Mammary epithelial cell (primary cell): ENCODE measurements at regions of chr13 and their contacts with region 1.

Region 1: GRCh38 chr13:31797154-31797775 is 57.9 kb downstream of the RXFP2 start:
- DNase-seq: peak; percentile 22
- H3K4me3 ChIP-seq: no peak overlapping the region
- H3K27ac ChIP-seq: no peak overlapping the region
- H3K4me1 ChIP-seq: no peaks in the 10 kb centered on the region
- H3K27me3 ChIP-seq: no peaks in the 10 kb centered on the region
- CTCF ChIP-seq: peak; percentile 35 to 48

Region 2: DNA sequence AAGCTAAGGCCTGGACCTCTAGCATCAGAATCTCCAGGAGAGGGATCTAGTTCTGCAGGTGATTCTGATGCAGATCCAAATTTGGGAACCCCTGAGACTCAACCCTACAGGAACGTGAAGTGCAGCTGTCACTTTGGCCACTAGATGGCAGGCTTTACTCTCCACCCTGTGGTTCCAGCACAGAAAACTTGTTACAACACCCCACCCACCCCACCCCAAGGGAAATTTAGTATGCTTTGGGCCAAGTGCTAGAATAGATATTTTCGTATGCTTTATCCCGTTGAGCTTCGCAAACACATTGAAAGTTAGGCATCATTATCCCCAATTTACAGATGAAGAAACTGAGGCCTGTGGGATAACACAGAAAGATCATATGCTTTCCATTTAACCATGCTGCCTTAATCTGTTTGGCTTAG is 365.5 kb before region 1 on chr13:
- CTCF ChIA-PET with region 1: no interaction called
- dilution Hi-C with region 1: no loop called
- in situ Hi-C with region 1: loop called (anchors 10 kb)
- intact Hi-C with region 1: loop called (anchors 1 kb)
- DNase-seq: peak; percentile 21
- H3K4me3 ChIP-seq: no peak overlapping the region
- H3K27ac ChIP-seq: no peak overlapping the region
- H3K4me1 ChIP-seq: no peaks in the 10 kb centered on the region
- H3K27me3 ChIP-seq: no peaks in the 10 kb centered on the region
- CTCF ChIP-seq: peak; percentile 70 to 76

Region 3: DNA sequence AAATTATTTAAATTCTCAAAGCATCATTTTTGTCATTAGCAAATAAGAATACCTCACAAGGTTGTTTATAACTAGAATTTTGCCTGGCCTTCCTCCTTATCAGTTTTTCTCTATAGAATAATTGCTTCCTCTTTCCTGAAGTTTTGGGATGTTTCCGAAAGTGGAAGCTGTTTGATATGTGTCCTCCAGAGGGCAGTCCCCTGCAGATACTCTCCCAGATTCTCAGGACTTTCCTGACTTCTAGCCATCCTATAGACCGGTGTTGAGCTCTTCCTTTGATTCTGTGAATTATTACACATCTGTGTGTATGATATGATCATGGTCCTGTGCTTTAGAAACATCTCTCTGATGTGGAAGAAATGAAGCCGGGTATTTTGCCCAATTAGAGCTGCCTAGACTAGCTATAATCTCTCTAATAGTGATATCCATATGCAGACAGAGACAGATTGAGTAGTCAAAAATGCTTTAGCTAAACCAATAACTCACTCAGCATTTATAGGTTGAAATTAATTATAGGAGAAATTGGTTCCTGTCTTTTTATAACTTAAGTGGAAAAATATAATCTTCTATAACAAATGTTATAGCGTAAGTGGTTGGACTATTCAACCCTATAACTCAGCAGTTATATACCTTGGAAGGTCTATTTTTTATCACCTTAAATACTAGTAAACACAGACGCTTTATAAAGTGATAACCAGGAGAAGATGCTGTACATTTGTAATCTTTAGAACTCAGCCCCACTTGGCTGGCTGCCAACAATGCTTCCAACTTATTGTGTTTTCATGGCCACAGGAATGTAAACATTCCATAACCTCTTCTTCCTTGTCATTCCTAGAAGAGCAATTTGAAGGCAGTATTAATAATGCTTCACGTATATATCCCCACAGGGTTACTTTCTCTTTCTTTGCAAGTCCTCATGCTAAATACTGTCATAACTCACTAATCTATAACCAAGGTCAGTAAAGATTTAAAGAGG is 258.9 kb before region 1 on chr13:
- CTCF ChIA-PET with region 1: interaction called, 5 read pairs
- dilution Hi-C with region 1: no loop called
- in situ Hi-C with region 1: loop called in 1 of 2 experiments (anchors 10 kb)
- intact Hi-C with region 1: loop called (anchors 1 kb)
- DNase-seq: peak; percentile 8
- H3K4me3 ChIP-seq: no peak overlapping the region
- H3K27ac ChIP-seq: no peak overlapping the region
- H3K4me1 ChIP-seq: no peaks in the 10 kb centered on the region
- H3K27me3 ChIP-seq: peaks cover 2% of the 10 kb centered on the region
- CTCF ChIP-seq: peak; percentile 53 to 75

Region 4: GRCh38 chr13:31742097-31742734 is 55.0 kb before region 1 on chr13:
- CTCF ChIA-PET with region 1: no interaction called
- dilution Hi-C with region 1: no loop called
- in situ Hi-C with region 1: no loop called
- intact Hi-C with region 1: loop called (anchors 1 kb)
- DNase-seq: peak; percentile 45
- H3K4me3 ChIP-seq: no peak overlapping the region
- H3K27ac ChIP-seq: no peak overlapping the region
- H3K4me1 ChIP-seq: no peaks in the 10 kb centered on the region
- H3K27me3 ChIP-seq: no peaks in the 10 kb centered on the region
- CTCF ChIP-seq: peak; percentile 97 to 98

Region 5: DNA sequence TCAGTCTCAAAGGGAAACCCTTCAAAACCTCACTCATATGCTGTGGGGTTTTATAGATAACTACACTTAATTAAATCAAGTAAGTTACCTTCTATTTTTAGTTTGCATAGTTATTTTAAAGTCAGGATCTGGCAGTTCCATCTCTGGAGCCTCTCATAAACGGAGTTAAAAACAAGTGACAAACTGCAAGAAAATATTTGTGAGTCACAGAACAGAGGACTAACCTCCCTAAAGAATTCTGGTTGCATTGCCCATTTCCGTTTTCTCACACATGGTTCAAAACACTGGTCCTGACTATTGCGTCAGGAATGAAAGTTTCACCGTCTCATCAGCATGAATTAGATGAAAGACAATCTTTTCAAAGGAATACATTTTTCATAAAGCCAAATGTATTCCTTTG is 47.3 kb before region 1 on chr13:
- CTCF ChIA-PET with region 1: no interaction called
- dilution Hi-C with region 1: no loop called
- in situ Hi-C with region 1: no loop called
- intact Hi-C with region 1: loop called (anchors 2 kb)
- DNase-seq: peak; percentile 81
- H3K4me3 ChIP-seq: no peak overlapping the region
- H3K27ac ChIP-seq: peak overlapping the region; percentile 48
- H3K4me1 ChIP-seq: peaks cover 8% of the 10 kb centered on the region
- H3K27me3 ChIP-seq: no peaks in the 10 kb centered on the region
- CTCF ChIP-seq: no peak